GM13977 (cell line): ENCODE measurements at regions of chr2 and their contacts with region 1.

Region 1: GRCh38 chr2:156332534-156333273 is at the start of gene NR4A2:
- DNase-seq: peak; percentile 90
- CTCF ChIP-seq: no peak

Region 2: DNA sequence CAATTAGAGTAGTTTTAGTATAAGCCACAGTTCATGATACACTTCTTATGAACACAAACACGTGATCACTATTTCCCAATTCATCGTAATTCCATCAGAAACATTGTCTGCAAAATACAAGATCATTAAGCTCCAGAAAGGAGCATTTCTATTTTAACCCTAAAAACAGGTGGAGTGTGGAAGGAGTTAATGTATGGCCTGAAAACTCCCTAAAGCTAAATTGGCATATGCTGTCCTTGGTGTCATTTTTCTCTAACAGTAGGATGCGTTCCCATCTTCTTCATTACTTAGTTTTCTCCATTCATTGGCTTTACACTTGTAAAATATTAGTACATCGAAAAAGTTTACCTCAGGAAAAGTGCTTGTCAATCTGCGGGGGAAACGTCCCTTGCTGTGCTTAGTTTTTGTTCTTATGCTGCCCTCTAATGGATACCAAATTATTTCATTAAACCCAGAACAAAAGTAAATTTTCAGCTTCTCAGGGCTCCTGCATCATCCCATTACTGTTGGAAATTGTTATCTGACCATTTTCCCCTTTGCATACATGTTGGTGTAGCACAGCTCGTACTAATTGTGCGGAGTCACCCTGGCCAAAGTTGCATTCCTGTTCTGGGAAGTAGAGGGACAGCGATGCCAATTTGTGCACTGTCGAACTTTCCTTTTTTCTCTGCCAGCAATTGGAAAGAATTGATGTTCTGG is 256.8 kb after region 1 on chr2:
- in situ Hi-C with region 1: loop called (anchors 10 kb)
- DNase-seq: peak; percentile 12
- CTCF ChIP-seq: peak; percentile 46